Calu3 (cell line): ENCODE measurements at regions of chr18 and their contacts with region 1.

Region 1: DNA sequence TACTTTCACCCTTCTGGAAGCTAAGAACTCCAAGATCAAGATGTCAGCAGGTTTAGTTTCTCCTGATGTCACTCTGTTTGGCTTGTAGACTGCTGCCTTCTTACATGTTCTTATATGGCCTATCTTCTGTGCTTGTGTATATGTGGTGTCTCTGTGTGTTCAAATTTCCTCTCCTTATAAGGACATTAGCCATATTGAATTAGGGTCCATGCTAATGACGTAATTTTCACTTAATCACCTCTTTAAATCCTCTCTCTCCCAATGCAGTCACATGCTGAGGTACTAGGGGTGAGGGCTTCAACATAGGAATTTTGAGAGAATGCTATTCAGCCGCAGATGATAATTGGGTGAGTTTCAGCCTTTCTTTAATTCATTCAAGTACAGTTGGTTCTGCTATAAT is 458.3 kb upstream of the SYT4 start:
- DNase-seq: no peak
- H3K4me3 Mint-ChIP-seq: no peak overlapping the region
- H3K27ac Mint-ChIP-seq: no peak overlapping the region
- H3K4me1 Mint-ChIP-seq: peaks cover 36% of the 10 kb centered on the region
- H3K27me3 Mint-ChIP-seq: no peaks in the 10 kb centered on the region
- CTCF ChIP-seq: no peak

Region 2: GRCh38 chr18:43780782-43781340 is 45.3 kb after region 1 on chr18:
- CTCF ChIA-PET with region 1: no interaction called
- intact Hi-C with region 1: loop called (anchors 2 kb)
- DNase-seq: no peak
- H3K4me3 Mint-ChIP-seq: no peak overlapping the region
- H3K27ac Mint-ChIP-seq: no peak overlapping the region
- H3K4me1 Mint-ChIP-seq: peaks cover 8% of the 10 kb centered on the region
- H3K27me3 Mint-ChIP-seq: no peaks in the 10 kb centered on the region
- CTCF ChIP-seq: no peak